HEK293 (cell line): ENCODE measurements at regions of chr2 and their contacts with region 1.

Region 1: DNA sequence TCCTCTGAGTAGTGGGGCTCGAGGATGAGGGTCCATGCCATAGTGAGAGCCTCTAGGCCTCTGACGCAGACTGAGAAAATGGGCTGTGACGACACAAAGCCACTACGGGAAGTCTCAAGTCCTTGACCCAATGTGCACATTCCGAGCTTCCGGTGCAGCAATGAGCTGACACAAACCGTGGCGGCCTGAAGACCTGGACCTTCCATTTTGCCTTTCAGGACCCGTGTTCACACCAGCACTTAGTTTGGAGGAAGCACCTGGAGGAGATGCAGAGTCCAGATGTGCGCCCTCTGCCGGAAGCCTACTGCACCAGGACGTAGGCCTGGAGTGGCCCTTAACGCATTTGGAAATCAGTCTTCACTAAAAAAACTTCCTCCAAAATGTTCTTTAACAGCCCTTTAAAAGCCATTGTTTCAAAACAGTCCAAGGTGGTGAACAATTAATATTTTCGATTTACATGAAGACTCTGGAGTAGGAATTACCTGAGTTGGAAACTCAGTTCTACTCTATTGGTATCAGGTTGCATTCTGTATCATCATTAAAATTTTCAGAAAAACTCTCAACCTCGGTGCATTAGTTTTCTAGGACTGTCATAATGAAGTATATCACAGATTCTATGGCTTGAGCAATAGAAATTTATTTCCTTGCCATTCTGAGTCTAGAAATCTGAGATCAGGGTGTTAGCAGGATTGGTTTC is 33.9 kb downstream of the BMP10 start:
- H3K4me3 ChIP-seq: no peak overlapping the region
- H3K27ac ChIP-seq: no peak overlapping the region
- H3K4me1 ChIP-seq: no peaks in the 10 kb centered on the region
- CTCF ChIP-seq: no peak

Region 2: GRCh38 chr2:68196120-68196716 is 641.1 kb before region 1 on chr2:
- CTCF ChIA-PET with region 1: no interaction called
- POLR2A ChIA-PET with region 1: no interaction called
- H3K4me3 ChIP-seq: no peak overlapping the region
- H3K27ac ChIP-seq: no peak overlapping the region
- H3K4me1 ChIP-seq: peaks cover 10% of the 10 kb centered on the region; the same call in 1 of the 2 replicates
- CTCF ChIP-seq: no peak

Region 3: DNA sequence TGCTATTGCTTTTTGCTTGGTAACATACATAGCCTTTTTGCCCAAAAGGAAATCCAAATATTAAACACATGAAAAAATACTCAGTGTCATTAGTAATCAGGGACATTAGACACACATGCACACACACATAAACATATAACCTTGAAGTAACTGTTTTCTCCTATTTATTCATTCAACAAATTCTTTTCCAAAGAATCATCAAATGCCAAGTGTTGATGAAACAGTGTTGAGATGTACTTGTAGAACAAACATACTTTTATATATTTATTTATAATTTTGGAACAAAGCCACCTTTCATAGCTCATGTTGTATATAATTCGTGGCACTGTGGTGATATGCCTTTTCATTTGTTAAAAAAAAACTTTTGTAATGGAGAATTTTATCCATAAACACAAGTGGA is 288.9 kb before region 1 on chr2:
- CTCF ChIA-PET with region 1: no interaction called
- POLR2A ChIA-PET with region 1: no interaction called
- H3K4me3 ChIP-seq: no peak overlapping the region
- H3K27ac ChIP-seq: no peak overlapping the region
- H3K4me1 ChIP-seq: no peaks in the 10 kb centered on the region
- CTCF ChIP-seq: no peak

Region 4: DNA sequence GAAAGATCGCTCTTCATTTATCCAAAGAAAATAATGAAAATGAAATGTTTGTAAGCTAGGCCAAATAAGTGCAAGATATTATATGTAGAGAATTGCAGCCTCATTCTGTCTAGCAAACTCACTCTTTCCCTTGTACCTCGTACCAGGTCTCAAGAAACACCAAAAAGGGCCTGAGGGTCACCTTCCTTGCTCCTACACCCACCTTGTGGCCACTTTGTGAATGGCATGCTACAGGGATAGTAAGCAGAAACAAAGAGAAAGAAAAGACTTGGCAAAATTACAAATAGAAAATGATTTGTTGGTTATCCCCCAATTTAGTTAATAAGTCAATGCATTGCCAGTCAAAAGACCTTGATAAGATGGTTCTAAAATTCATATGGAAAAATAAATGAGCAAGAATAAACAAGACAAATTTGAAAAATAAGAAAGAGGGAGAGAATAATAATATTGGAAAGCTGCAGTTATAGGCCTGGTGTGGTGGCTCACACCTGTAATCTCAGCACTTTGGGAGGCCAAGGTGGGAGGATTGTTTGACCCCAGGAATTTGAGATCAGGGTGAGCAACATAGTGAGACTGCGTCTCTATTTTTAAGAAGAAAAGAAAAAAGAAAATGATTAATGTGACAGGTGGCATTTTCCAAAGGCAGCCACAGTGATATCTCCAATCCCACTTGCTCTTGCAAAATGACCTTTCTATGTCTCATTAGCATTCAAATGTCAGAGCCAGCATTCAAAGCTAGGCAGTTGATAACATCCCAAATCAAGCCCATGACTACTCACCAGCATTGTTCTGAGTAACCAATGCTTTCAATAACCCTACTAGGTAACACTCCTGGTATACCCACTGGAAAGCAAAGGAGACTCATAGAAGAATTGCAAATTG is 72.7 kb after region 1 on chr2:
- CTCF ChIA-PET with region 1: interaction called, 21 read pairs
- POLR2A ChIA-PET with region 1: no interaction called
- H3K4me3 ChIP-seq: no peak overlapping the region
- H3K27ac ChIP-seq: no peak overlapping the region
- H3K4me1 ChIP-seq: 0 out of 2 replicates have a peak, but pooled peaks cover 2% of the 10 kb centered on the region
- CTCF ChIP-seq: peak; percentile 24; the same call in 1 of the 2 replicates

Region 5: DNA sequence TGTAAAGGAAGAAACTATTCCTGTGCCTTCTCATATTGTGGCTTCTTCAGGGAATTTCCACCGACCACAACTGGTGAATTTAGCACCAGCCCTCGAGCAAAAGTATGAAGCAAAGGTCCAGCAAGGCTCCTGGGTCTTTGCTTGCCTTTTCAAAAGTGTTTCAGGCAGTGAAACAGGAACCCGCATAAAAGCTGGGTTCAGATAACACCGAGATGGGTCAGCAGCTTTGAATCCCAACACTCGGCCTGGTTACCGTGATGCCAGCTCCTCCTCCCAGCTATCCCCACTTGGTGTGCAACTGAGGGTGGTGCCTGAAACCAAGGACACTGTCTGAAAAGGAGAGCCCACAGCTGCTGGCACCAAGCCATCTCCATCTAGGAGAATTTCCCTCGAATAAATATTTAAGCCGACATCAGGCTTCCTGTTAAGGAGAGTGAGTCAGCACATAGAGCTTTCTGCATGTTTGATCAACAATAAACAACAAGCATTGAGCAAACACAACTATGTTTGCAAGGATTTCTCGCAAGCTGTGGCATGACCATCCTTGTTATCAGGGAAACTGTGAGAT is 245.2 kb after region 1 on chr2:
- CTCF ChIA-PET with region 1: no interaction called
- POLR2A ChIA-PET with region 1: no interaction called
- H3K4me3 ChIP-seq: no peak overlapping the region
- H3K27ac ChIP-seq: no peak overlapping the region
- H3K4me1 ChIP-seq: no peaks in the 10 kb centered on the region; the same call in 1 of the 2 replicates
- CTCF ChIP-seq: no peak